SK-N-SH (cell line): ENCODE measurements at regions of chr1 and their contacts with region 1.

Region 1: DNA sequence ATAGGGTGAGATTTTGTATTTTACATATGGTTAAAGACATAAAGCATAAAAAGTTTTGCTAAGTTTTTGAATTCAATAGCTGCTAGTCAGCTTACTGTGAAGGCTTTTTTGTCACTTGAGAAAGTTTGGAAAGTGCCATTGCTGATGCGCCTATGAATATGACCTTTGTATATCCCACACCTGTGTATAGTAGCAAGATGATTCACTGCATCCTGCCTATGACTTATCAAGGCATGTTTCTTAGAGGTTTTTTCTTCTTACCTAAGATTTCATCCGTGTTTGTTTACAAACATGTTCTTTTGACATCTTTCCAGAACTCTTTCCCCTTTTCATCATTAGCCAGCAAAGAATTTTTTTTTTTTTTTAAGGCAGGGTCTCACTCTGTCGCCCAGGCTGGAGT is 51.5 kb downstream of the PRKAA2 start:
- DNase-seq: no peak
- H3K4me3 ChIP-seq: no peak overlapping the region
- H3K27ac ChIP-seq: no peak overlapping the region
- H3K4me1 ChIP-seq: no peaks in the 10 kb centered on the region
- H3K27me3 ChIP-seq: no peaks in the 10 kb centered on the region
- CTCF ChIP-seq: no peak
- EP300 ChIP-seq: no peak
- RAD21 ChIP-seq: no peak

Region 2: GRCh38 chr1:56654126-56654923 is 42.3 kb before region 1 on chr1:
- CTCF ChIA-PET with region 1: no interaction called
- POLR2A ChIA-PET with region 1: no interaction called
- DNase-seq: no peak
- H3K4me3 ChIP-seq: no peak overlapping the region
- H3K27ac ChIP-seq: peak overlapping the region; percentile 56 to 67; a peak in 3 of 4 replicates
- H3K4me1 ChIP-seq: no peaks in the 10 kb centered on the region; a peak in 1 of 4 replicates
- H3K27me3 ChIP-seq: no peaks in the 10 kb centered on the region
- CTCF ChIP-seq: no peak
- EP300 ChIP-seq: peak; percentile 11 to 93; a peak in 2 of 4 replicates
- RAD21 ChIP-seq: no peak

Region 3: DNA sequence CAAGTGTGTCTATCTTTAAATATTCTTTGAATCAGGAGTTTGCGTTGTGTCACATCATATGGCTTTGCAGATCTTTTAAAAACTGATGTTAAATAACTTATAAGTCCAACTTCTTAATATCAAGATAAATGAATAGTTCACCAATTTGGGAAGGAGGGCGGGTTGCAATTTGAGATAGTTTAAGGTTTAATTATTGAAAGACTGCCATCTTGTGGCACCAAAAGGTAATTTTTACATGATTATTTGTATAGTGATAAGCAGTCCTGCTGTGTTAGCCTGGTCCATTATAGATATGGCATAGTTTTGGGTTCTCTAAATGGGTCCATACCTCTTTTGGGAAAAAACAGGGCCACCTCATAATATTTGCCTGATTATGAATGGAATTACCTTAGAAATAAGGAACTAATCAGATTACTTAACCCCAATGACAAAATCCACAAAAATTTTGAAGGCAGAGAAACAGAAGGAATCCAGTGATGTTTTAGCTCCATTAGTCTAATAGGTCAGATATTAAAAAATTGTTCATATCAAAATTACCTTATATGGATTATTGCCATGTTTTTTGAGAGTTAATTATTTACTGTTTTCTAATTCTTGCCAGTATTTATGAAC is 12.7 kb after region 1 on chr1:
- CTCF ChIA-PET with region 1: interaction called, 23 read pairs
- POLR2A ChIA-PET with region 1: no interaction called
- DNase-seq: peak; percentile 32
- H3K4me3 ChIP-seq: no peak overlapping the region; a peak in 1 of 4 replicates
- H3K27ac ChIP-seq: no peak overlapping the region
- H3K4me1 ChIP-seq: peaks cover 0 to 12% of the 10 kb centered on the region in 2 experiments; a peak in 3 of 4 replicates
- H3K27me3 ChIP-seq: no peaks in the 10 kb centered on the region
- CTCF ChIP-seq: peak; percentile 75
- EP300 ChIP-seq: no peak
- RAD21 ChIP-seq: peak; percentile 75